Activated naive CD4-positive, alpha-beta T cell treated with anti-CD3 and anti-CD28 coated beads for 36 hours (primary cell): ENCODE measurements at regions of chr2 and their contacts with region 1.

Region 1: DNA sequence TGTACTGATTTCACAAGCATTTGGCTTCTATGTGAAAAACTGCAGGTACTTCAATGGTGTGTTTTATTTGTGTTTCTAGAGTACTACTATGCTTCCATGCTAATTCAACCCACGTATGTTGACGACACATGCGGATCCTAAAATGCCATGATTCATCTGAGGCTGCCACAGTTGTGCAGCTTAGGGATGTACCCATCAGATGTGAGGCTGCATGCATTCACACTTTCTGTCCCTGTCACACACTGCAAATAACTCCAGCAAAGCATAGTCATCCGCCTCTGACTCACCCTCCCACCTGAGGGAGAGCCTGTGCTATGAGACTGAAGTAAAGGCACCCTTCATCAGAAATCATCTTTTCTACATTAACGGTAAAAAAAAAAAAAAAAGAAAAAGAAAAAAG is 22.1 kb upstream of the SERTAD2 start:
- DNase-seq: peak; percentile 92
- H3K4me3 Mint-ChIP-seq: no peak overlapping the region
- H3K27ac Mint-ChIP-seq: no peak overlapping the region
- H3K4me1 Mint-ChIP-seq: peaks cover 42% of the 10 kb centered on the region
- H3K27me3 Mint-ChIP-seq: no peaks in the 10 kb centered on the region

Region 2: DNA sequence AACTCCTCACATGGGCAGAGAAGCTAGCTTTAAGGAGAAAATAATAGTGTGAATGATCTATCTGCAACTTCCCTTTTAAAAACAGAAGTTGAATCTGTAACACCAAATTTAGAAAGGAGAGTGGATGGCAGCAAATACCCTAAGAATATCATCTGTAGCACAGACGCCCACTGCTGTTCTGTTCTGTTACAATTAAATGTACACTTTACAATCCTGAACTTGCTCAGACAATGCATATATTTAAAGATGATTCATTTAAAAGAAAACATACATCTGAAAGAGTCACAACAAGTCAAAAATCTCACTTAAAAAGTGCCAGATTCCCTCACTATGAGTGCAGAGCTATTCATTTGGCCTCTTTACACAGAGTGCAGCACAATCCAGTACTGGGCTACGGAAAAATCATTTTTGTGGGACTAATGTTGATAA is 14.1 kb before region 1 on chr2:
- CTCF ChIA-PET with region 1: interaction called, 15 read pairs
- intact Hi-C with region 1: loop called (anchors 1 kb)
- DNase-seq: no peak
- H3K4me3 Mint-ChIP-seq: no peak overlapping the region
- H3K27ac Mint-ChIP-seq: peak overlapping the region; percentile 56
- H3K4me1 Mint-ChIP-seq: peaks cover 68% of the 10 kb centered on the region
- H3K27me3 Mint-ChIP-seq: no peaks in the 10 kb centered on the region

Region 3: DNA sequence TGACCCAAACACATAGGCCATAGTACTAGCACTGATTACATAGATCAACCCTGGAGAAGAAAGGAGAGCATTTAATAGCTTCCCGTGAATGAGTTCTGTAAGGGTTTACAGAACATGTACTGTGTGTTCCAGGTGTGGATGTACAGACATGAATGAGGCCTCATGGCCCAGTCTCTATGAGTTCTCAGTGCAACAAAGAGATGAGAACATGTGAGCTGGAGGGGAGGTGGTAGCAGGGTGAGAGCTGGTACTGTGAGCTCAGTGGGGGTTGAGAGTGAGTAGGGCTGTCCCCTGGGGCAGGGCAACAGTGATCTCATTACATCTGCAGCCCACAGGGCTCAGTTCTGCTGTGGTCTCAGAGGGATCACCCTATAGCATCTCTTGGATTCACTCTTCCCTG is 799.1 kb after region 1 on chr2:
- CTCF ChIA-PET with region 1: no interaction called
- intact Hi-C with region 1: no loop called
- DNase-seq: no peak
- H3K4me3 Mint-ChIP-seq: no peak overlapping the region
- H3K27ac Mint-ChIP-seq: no peak overlapping the region
- H3K4me1 Mint-ChIP-seq: no peaks in the 10 kb centered on the region
- H3K27me3 Mint-ChIP-seq: no peaks in the 10 kb centered on the region